GM18951 (cell line): ENCODE measurements at regions of chr13 and their contacts with region 1.

Region 1: DNA sequence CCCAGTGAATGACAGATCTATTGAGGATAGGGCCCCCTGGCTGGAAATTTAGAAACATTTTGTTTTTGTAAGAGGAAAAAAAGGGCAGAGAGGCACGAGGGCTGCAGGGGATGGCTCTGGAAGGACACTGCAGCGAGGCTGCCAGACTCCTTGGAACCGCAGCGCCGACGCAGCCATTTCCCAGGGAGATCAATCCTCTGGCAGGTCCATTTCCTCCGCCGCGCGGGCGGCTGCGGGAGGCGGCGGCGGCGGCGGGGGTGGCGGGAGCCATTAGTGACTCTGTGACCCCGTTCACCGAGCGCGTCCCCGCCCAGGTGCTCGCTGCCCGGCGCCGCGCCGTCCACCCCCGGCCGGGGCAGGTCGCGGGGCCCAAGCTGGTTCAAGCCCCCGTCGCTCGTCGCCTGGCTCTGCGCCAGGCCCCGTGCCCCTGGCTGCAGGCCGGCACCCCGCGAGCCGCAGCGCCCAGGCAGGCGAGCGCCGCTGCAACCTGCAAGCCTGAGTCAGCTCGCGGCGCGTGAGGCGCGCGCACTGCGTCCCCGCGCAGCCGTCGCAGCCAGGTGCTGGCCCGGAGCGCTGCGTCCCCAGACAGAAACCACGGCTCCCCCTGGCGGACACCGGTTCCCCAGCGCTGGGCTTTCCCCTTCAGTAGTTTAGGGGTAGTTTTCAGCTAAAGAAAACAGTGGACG is 192.6 kb downstream of the KATNAL1 start:
- POLR2A ChIP-seq: peak; percentile 63

Region 2: GRCh38 chr13:29472332-29472961 is 642.3 kb before region 1 on chr13:
- in situ Hi-C with region 1: no loop called
- POLR2A ChIP-seq: no peak

Region 3: DNA sequence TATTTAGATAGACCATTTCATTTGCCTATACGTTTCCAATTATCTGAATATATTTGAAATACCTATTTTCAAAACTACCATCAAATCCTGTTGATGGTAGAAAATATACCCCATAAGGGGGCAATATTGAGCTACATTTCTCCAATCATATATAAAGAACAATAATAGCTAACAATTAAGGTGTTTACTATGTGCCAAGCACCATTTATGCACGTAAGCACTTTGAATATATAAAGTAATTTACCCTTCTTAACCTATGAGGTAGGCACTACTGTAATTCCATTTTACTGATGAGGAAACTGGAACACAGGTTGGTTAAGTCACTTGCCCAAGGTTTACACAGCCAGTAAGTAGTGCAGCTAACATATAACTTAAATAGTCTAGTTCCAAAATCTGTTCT is 343.5 kb before region 1 on chr13:
- in situ Hi-C with region 1: loop called (anchors 10 kb)
- POLR2A ChIP-seq: no peak

Region 4: GRCh38 chr13:30504081-30504480 is 389.4 kb after region 1 on chr13:
- in situ Hi-C with region 1: no loop called
- POLR2A ChIP-seq: no peak